Gastrocnemius medialis (tissue), 4 donors: ENCODE measurements at regions of chr13 and their contacts with region 1.

Region 1: GRCh38 chr13:110412132-110412914 is 105.2 kb downstream of the COL4A2 start:
- DNase-seq: peak; percentile 87 to 93
- ATAC-seq: peak; percentile 88
- H3K4me3 ChIP-seq: peak overlapping the region in 1 of 4 donors; percentile 22
- H3K27ac ChIP-seq: peak overlapping the region; percentile 75 to 87 (median 80)
- H3K4me1 ChIP-seq: peaks cover 59 to 61% of the 10 kb centered on the region in 2 donors
- H3K27me3 ChIP-seq: no peaks in the 10 kb centered on the region
- CTCF ChIP-seq: peak; percentile 81 to 93 (median 84)
- POLR2A ChIP-seq: no peak

Region 2: GRCh38 chr13:110216398-110217041 is 195.8 kb before region 1 on chr13:
- in situ Hi-C with region 1: loop called in 2 of 4 experiments (anchors 5 to 10 kb)
- intact Hi-C with region 1: no loop called
- DNase-seq: peak in 1 of 2 donors; percentile 45
- ATAC-seq: peak; percentile 70 to 71
- H3K4me3 ChIP-seq: peak overlapping the region in 1 of 4 donors; percentile 8
- H3K27ac ChIP-seq: peak overlapping the region; percentile 62 to 73 (median 68)
- H3K4me1 ChIP-seq: peaks cover 23 to 31% of the 10 kb centered on the region in 2 donors
- H3K27me3 ChIP-seq: no peaks in the 10 kb centered on the region
- CTCF ChIP-seq: no peak
- POLR2A ChIP-seq: no peak

Region 3: GRCh38 chr13:110233181-110233950 is 179.0 kb before region 1 on chr13:
- in situ Hi-C with region 1: loop called in 3 of 4 experiments (anchors 5 to 25 kb)
- intact Hi-C with region 1: no loop called
- DNase-seq: peak; percentile 49 to 69
- ATAC-seq: peak; percentile 59 to 75
- H3K4me3 ChIP-seq: peak overlapping the region; percentile 16 to 34 (median 26)
- H3K27ac ChIP-seq: peak overlapping the region; percentile 54 to 79 (median 74)
- H3K4me1 ChIP-seq: peaks cover 23 to 49% of the 10 kb centered on the region in 2 donors
- H3K27me3 ChIP-seq: peaks cover 0 to 7% (median 0%) of the 10 kb centered on the region in 3 donors
- CTCF ChIP-seq: no peak
- POLR2A ChIP-seq: no peak

Region 4: GRCh38 chr13:110396913-110397381 is 15.4 kb before region 1 on chr13:
- in situ Hi-C with region 1: no loop called
- intact Hi-C with region 1: loop called (anchors 2 kb)
- DNase-seq: peak; percentile 74 to 89
- ATAC-seq: peak; percentile 89 to 94
- H3K4me3 ChIP-seq: peak overlapping the region in 3 of 4 donors; percentile 23 to 29 (median 26)
- H3K27ac ChIP-seq: peak overlapping the region; percentile 68 to 77 (median 72)
- H3K4me1 ChIP-seq: peaks cover 7 to 47% of the 10 kb centered on the region in 2 donors
- H3K27me3 ChIP-seq: peaks cover 0 to 12% (median 0%) of the 10 kb centered on the region in 3 donors
- CTCF ChIP-seq: no peak
- POLR2A ChIP-seq: peak; percentile 3 to 43

Region 5: GRCh38 chr13:111177081-111177711 is 764.9 kb after region 1 on chr13:
- in situ Hi-C with region 1: no loop called
- intact Hi-C with region 1: no loop called
- DNase-seq: peak; percentile 19 to 61
- ATAC-seq: peak; percentile 66 to 84
- H3K4me3 ChIP-seq: no peak overlapping the region
- H3K27ac ChIP-seq: peak overlapping the region; percentile 73 to 82 (median 80)
- H3K4me1 ChIP-seq: peaks cover 85% of the 10 kb centered on the region in 2 donors
- H3K27me3 ChIP-seq: no peaks in the 10 kb centered on the region
- CTCF ChIP-seq: no peak
- POLR2A ChIP-seq: peak in 1 of 2 donors; percentile 43